SK-N-SH (cell line): ENCODE measurements at regions of chr20 and their contacts with region 1.

Region 1: DNA sequence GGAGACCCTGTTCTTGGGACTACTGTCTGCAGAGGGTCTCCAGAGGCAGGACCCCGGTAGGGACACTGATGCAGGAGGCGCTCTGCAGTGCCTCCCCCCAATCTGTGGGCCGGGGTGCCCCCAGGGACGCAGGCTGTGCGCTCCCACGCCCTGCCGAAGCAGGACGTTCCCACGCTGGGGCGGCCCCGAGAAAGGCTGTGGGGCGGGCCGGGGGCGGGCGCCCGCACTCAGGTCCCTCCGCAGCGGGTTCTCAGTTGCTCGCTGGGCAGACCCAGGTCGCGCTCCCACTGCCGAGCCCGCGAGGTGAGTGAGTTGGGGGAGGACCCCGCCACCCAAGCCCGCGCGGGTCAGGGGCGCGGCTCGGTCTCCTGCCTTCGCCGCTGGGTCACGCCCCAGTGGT is at the start of gene COX4I2:
- DNase-seq: peak; percentile 61
- H3K4me3 ChIP-seq: no peak within 1 kb of the TSS
- H3K27ac ChIP-seq: peak within 1 kb of the TSS in 1 of 2 experiments; percentile 88; a peak in 2 of 4 replicates
- H3K4me1 ChIP-seq: peaks cover 0 to 31% of the 10 kb centered on the region in 2 experiments; a peak in 2 of 4 replicates
- H3K27me3 ChIP-seq: no peaks in the 10 kb centered on the region
- CTCF ChIP-seq: no peak
- EP300 ChIP-seq: no peak
- RAD21 ChIP-seq: no peak
- polyA plus RNA-seq, gene COX4I2: 0.21 TPM in 1 of 2 replicates, not detected in the other

Region 2: DNA sequence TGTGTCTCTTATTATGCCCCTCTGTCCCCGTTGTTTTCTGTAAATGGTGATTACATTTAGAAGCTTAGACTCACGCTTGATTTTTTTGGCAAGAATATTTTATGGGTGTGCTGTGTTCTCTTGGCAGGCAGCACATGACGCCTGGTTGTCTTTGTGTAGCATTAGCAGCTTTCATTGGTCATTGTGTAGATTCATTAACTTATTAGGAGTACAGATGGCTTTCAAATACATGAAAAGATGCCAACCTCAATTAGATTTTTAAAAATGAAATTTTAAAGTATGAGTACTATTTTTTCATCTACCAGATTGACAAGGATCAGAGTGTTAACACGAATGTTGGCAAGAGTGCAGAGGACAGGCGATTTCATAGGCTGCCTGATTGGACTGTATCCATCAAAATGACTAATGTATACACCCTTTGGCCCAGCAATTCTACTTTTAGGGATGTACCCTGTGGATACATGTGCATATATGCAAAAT is 15.3 kb after region 1 on chr20:
- CTCF ChIA-PET with region 1: interaction called, 64 read pairs
- POLR2A ChIA-PET with region 1: interaction called, 6 read pairs
- DNase-seq: peak; percentile 67
- H3K4me3 ChIP-seq: no peak overlapping the region
- H3K27ac ChIP-seq: peak overlapping the region; percentile 34 to 86; a peak in 3 of 4 replicates
- H3K4me1 ChIP-seq: peaks cover 12 to 23% of the 10 kb centered on the region in 2 experiments; a peak in 3 of 4 replicates
- H3K27me3 ChIP-seq: no peaks in the 10 kb centered on the region
- CTCF ChIP-seq: no peak
- EP300 ChIP-seq: peak in 1 of 2 experiments; percentile 95; a peak in 2 of 4 replicates
- RAD21 ChIP-seq: no peak; the same call in 1 of the 2 replicates